ENCODE measurements at regions of chr17 and their contacts with region 1.

Region 1: DNA sequence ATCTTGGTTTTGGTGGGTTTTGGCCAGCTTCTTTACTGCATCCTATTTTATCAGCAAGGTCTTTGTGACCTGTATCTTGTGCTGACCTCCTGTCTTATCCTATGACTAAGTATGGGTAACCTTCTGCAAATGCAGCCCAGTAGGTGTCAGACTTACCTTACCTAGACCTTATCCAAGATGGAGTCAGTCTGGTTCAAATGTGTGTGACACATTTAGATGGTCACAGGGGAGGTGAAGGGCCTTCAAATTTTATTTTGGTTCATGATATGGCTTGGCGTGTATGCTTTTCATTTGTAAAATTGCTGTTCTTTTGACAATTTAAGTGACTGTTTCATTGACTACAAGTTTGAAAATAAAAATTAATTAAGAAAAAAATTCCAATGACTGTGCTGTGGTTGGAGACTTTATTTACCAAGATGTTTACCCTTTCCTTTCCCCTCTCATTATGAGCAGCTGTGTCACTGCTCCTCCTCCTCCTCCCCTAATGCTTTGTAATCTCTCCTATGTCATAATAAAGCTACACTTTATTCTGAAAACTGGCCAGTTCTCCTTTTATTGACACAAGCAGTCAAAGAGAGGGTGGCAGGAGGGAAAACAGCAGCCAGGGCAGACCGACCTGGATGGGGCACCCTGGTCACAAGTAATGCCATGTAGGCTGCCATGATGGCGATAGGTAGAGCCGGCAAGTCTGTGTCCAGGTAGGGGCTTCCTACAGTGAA is 49.4 kb downstream of the TNFRSF13B start:
- DNase-seq: no peak
- ATAC-seq: no peak
- H3K4me3 ChIP-seq: no peak overlapping the region
- H3K27ac ChIP-seq: no peak overlapping the region
- H3K4me1 ChIP-seq: no peaks in the 10 kb centered on the region
- H3K27me3 ChIP-seq: peaks cover 9 to 28% of the 10 kb centered on the region in 2 experiments; a peak in 4 of 5 replicates
- CTCF ChIP-seq: peak; percentile 34
- EP300 ChIP-seq: no peak
- POLR2A ChIP-seq: no peak
- RAD21 ChIP-seq: no peak

Region 2: DNA sequence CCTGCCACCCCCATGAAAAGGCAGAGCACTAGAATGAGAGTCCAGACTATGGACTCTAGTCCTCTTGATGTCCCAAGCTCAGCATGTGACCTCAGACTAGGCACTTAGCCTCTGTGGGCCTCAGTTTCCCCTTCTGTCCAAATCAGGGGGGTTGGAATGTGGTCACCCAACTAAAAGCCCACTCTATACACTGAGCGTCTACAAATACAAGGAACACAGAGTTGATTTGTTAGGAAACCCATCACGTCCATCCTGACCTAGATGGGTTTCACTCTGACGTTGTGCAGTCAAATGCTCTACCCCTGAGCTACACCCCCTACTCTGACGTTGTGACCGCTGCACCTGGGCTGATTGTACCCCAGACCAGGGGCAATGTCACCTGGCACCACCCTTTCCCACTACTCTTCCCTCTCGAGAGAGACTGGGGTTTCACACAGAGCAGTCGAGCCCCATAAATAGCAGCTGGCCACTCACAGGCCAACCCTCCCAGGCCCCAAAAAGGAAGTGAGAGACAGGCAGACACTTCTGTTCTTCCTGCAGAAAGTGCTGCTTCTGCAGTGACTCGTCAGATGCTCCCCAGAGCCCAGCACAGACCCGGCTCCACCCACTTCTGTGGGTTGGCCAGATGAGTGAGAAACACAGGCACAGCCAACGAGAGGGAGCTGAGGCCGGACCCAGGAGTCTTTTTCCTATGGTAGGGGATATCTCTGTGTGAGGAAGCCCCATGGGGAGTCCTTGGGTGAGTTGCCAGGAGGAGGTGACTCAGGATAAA is 65.5 kb after region 1 on chr17:
- CTCF ChIA-PET with region 1: interaction called, 3 read pairs
- POLR2A ChIA-PET with region 1: no interaction called
- in situ Hi-C with region 1: loop called (anchors 5 kb)
- intact Hi-C with region 1: no loop called
- DNase-seq: no peak
- ATAC-seq: peak; percentile 24; the same call in 1 of the 3 replicates
- H3K4me3 ChIP-seq: no peak overlapping the region
- H3K27ac ChIP-seq: no peak overlapping the region
- H3K4me1 ChIP-seq: no peaks in the 10 kb centered on the region
- H3K27me3 ChIP-seq: peaks cover 0 to 10% of the 10 kb centered on the region in 2 experiments; a peak in 3 of 5 replicates
- CTCF ChIP-seq: no peak
- EP300 ChIP-seq: no peak
- POLR2A ChIP-seq: no peak
- RAD21 ChIP-seq: no peak

Measured in HepG2 (cell line).